Thyroid gland (tissue), 4 donors: ENCODE measurements at regions of chr9 and their contacts with region 1.

Region 1: DNA sequence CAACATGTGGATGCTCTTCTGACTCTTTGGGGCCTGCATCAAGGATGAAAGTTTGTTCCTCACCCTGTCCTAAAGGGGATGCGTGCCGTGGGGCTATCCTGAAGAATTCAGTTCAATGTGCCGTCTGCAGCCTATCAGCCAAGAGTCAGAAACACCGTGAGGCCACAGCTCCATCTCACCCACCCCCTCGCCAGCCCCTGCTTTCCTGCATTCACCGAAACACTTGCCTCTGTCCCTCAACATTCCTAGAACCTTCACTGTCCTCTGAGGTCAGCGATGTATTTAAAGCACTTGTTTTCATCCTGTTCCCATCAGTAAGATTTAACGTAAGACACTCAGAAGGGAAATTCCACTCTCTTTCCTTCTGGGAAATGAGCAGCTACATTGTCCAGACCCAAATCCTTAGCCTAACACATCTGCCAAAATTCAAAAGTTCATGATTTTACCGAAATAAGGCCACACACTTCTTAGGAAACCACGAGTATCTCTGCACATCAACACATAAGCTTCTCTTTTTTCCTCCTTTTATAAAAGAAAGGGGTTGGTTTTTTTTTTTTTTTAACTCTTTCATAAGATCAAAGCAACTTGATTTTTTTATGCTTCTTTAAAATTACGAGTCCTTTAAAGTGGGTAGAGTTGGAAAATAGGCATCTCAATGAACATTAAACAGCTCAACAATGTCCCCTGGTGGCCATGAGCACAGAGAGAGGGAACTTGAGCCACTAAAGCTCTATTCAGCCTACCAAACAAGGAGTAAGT is 100.7 kb downstream of the SUSD1 start:
- DNase-seq: peak; percentile 58 to 65
- H3K4me3 ChIP-seq: no peak overlapping the region
- H3K27ac ChIP-seq: peak overlapping the region in 2 of 3 donors; percentile 41 to 59
- H3K4me1 ChIP-seq: peaks cover 0 to 12% of the 10 kb centered on the region in 2 donors
- H3K27me3 ChIP-seq: no peaks in the 10 kb centered on the region
- CTCF ChIP-seq: peak; percentile 74 to 95 (median 87)
- POLR2A ChIP-seq: no peak

Region 2: GRCh38 chr9:111597817-111598729 is 476.4 kb before region 1 on chr9:
- intact Hi-C with region 1: loop called (anchors 10 kb)
- DNase-seq: peak; percentile 77 to 85
- H3K4me3 ChIP-seq: peak overlapping the region; percentile 16 to 68 (median 47)
- H3K27ac ChIP-seq: peak overlapping the region; percentile 59 to 89 (median 75)
- H3K4me1 ChIP-seq: peaks cover 0 to 8% of the 10 kb centered on the region in 2 donors
- H3K27me3 ChIP-seq: no peaks in the 10 kb centered on the region
- CTCF ChIP-seq: peak; percentile 36 to 94 (median 65)
- POLR2A ChIP-seq: no peak

Region 3: GRCh38 chr9:111759762-111760639 is 314.4 kb before region 1 on chr9:
- intact Hi-C with region 1: loop called (anchors 5 kb)
- DNase-seq: peak; percentile 10 to 24
- H3K4me3 ChIP-seq: no peak overlapping the region
- H3K27ac ChIP-seq: no peak overlapping the region
- H3K4me1 ChIP-seq: no peaks in the 10 kb centered on the region
- H3K27me3 ChIP-seq: no peaks in the 10 kb centered on the region
- CTCF ChIP-seq: peak in 5 of 6 experiments; percentile 30 to 66 (median 58)
- POLR2A ChIP-seq: no peak

Region 4: GRCh38 chr9:111896353-111896958 is 178.0 kb before region 1 on chr9 and contains the start of gene UGCG:
- intact Hi-C with region 1: loop called (anchors 5 kb)
- DNase-seq: peak; percentile 81 to 89
- H3K4me3 ChIP-seq: peak within 1 kb of the TSS; percentile 62 to 100 (median 82)
- H3K27ac ChIP-seq: peak within 1 kb of the TSS; percentile 78 to 88 (median 84)
- H3K4me1 ChIP-seq: peaks cover 8 to 29% of the 10 kb centered on the region in 2 donors
- H3K27me3 ChIP-seq: no peaks in the 10 kb centered on the region
- CTCF ChIP-seq: no peak
- POLR2A ChIP-seq: peak in 1 of 2 donors; percentile 98
- total RNA-seq, gene UGCG: 12.5 to 30.4 (median 21.2) TPM

Region 5: DNA sequence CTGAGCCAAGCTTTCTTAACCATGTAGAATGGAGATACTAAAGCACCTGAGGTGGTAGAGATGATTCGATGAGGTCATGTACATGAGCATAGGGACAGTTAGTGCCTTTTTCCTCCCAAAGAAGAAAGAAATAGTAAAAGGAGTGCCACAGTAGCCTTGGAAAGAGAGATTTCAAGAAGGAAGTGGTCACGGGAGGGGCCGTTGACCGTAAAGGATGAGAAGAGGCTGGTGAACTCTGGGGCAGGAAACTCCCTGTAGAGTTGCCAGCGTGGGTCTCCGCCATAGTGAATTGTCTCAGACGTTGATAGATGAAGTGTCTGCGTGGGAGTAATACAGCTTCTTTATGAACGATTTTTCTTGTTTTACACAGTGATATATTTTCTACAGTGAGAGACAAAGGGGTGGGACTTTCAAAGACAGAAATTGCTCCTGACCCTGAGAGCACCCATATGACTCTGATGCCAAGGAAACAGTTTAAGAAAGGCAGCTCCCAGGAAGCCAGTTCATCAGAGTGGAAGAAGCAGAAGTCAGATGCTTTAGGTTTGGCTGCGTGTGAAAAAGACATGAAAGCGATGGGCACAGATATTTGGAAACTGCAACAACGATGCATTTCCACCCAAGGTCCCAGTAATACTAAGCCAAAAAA is 136.5 kb before region 1 on chr9:
- intact Hi-C with region 1: no loop called
- DNase-seq: peak; percentile 4 to 9
- H3K4me3 ChIP-seq: no peak overlapping the region
- H3K27ac ChIP-seq: no peak overlapping the region
- H3K4me1 ChIP-seq: peaks cover 0 to 7% of the 10 kb centered on the region in 2 donors
- H3K27me3 ChIP-seq: no peaks in the 10 kb centered on the region
- CTCF ChIP-seq: no peak
- POLR2A ChIP-seq: no peak

Region 6: GRCh38 chr9:112241516-112241915 is 167.1 kb after region 1 on chr9:
- intact Hi-C with region 1: no loop called
- DNase-seq: no peak
- H3K4me3 ChIP-seq: no peak overlapping the region
- H3K27ac ChIP-seq: no peak overlapping the region
- H3K4me1 ChIP-seq: no peaks in the 10 kb centered on the region
- H3K27me3 ChIP-seq: no peaks in the 10 kb centered on the region
- CTCF ChIP-seq: no peak
- POLR2A ChIP-seq: no peak